H1 (cell line): ENCODE measurements at regions of chr6 and their contacts with region 1.

Region 1: GRCh38 chr6:16206595-16207037 is 31.8 kb upstream of the GMPR start:
- DNase-seq: peak in 1 of 2 experiments; percentile 59
- H3K4me3 ChIP-seq: no peak overlapping the region
- H3K27ac ChIP-seq: no peak overlapping the region
- H3K4me1 ChIP-seq: no peaks in the 10 kb centered on the region
- H3K27me3 ChIP-seq: no peaks in the 10 kb centered on the region
- CTCF ChIP-seq: peak in 2 of 3 experiments; percentile 88; a peak in 3 of 4 replicates
- EP300 ChIP-seq: no peak
- POLR2A ChIP-seq: no peak
- RAD21 ChIP-seq: peak; percentile 96 to 97

Region 2: DNA sequence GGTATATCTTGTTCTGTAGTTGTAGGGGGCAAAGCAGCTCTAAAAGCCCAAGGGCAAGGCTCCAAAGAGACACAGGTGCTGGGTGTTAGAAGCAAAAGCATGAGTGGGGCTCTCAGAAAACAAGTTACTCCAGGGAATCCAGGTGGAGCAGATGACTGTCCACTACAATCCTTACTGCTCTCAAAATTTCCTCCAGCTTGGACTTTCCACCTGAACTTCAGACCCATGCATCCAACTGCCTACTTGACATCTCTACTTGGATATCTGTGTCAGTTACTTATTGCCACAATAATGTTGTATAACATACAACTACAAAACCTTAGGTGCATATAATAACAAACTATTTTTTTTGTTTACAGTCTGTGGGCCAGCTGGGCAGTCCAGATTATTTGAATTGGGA is 521.0 kb before region 1 on chr6:
- CTCF ChIA-PET with region 1: interaction called, 14 read pairs
- POLR2A ChIA-PET with region 1: no interaction called
- DNase-seq: no peak
- H3K4me3 ChIP-seq: no peak overlapping the region
- H3K27ac ChIP-seq: no peak overlapping the region
- H3K4me1 ChIP-seq: no peaks in the 10 kb centered on the region
- H3K27me3 ChIP-seq: no peaks in the 10 kb centered on the region
- CTCF ChIP-seq: no peak
- EP300 ChIP-seq: no peak
- POLR2A ChIP-seq: no peak
- RAD21 ChIP-seq: no peak

Region 3: DNA sequence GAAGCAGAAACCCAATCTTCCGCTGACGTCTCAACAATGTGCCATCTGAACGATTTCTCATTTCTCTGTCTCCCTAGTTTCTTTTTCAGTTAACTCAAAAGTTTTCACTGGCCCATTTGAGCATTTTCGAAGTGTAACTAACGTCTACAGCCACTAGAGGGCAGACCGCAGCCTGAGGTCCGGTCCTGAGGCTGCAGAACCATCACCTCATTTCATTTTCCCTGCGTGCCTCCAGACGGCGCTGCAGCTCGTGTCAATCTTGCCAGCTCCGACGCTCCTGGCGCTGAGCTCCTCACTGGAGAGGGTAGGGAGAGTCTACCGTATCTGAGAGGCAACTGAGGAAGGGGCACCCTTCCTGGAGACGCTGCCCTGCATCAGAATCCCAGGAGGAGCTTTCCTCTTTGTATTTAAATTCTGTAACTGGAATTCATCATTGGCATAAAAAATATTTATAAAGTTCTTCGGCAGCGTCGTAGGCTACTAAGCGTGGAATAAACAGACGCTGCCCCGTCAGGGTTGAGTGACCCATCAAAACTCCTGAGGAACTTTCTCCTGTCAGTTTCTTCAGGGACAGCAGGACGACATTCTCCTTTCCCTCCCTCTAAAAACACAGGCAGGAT is 515.3 kb before region 1 on chr6:
- CTCF ChIA-PET with region 1: interaction called, 48 read pairs
- POLR2A ChIA-PET with region 1: no interaction called
- DNase-seq: peak; percentile 75 to 79
- H3K4me3 ChIP-seq: no peak overlapping the region
- H3K27ac ChIP-seq: no peak overlapping the region
- H3K4me1 ChIP-seq: no peaks in the 10 kb centered on the region
- H3K27me3 ChIP-seq: no peaks in the 10 kb centered on the region
- CTCF ChIP-seq: peak; percentile 100
- EP300 ChIP-seq: no peak
- POLR2A ChIP-seq: no peak
- RAD21 ChIP-seq: peak; percentile 100

Region 4: GRCh38 chr6:16168858-16169257 is 37.8 kb before region 1 on chr6:
- CTCF ChIA-PET with region 1: interaction called, 14 read pairs
- POLR2A ChIA-PET with region 1: no interaction called
- DNase-seq: no peak
- H3K4me3 ChIP-seq: no peak overlapping the region
- H3K27ac ChIP-seq: no peak overlapping the region
- H3K4me1 ChIP-seq: no peaks in the 10 kb centered on the region
- H3K27me3 ChIP-seq: no peaks in the 10 kb centered on the region; a peak in 1 of 7 replicates
- CTCF ChIP-seq: peak in 2 of 3 experiments; percentile 67 to 72; a peak in 3 of 4 replicates
- EP300 ChIP-seq: no peak
- POLR2A ChIP-seq: no peak
- RAD21 ChIP-seq: peak; percentile 82 to 88

Region 5: GRCh38 chr6:16183187-16183664 is 23.4 kb before region 1 on chr6:
- CTCF ChIA-PET with region 1: interaction called, 19 read pairs
- POLR2A ChIA-PET with region 1: no interaction called
- DNase-seq: no peak
- H3K4me3 ChIP-seq: no peak overlapping the region
- H3K27ac ChIP-seq: no peak overlapping the region
- H3K4me1 ChIP-seq: peaks cover 0 to 5% (median 0%) of the 10 kb centered on the region in 4 experiments; a peak in 2 of 7 replicates
- H3K27me3 ChIP-seq: no peaks in the 10 kb centered on the region
- CTCF ChIP-seq: peak in 2 of 3 experiments; percentile 46 to 60; a peak in 2 of 4 replicates
- EP300 ChIP-seq: no peak
- POLR2A ChIP-seq: no peak
- RAD21 ChIP-seq: peak; percentile 66 to 70

Region 6: DNA sequence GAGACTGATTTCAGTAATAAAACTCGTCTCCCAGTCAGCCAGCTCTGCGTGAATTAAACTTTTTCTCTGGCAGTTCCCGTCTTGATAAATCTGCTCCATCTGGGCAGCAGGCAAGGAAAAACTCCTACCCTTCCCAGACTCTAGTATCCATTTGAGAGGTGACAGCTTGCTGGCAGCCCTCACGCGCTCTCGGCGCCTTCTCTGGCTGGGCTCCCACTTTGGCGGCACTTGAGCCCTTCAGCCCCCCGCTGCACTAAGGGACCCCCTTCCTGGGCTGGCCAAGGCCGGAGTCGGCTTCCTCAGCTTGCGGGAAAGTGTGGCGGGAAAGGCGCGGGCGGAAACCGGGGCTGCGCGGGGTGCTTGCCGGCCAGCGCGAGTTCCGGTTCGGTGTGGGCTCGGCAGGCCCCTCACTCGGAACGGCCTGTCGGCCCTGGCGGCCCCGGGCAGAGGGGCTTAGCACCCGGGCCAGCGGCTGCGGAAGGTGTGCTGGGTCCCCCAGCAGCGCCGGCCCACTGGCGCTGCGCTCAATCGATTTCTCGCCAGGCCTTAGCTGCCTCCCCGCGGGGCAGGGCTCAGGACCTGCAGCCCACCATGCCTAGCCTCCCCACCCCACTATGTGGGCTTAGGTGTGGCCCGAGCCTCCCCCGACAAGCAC is 10.0 kb after region 1 on chr6:
- CTCF ChIA-PET with region 1: interaction called, 30 read pairs
- POLR2A ChIA-PET with region 1: no interaction called
- DNase-seq: peak in 1 of 2 experiments; percentile 54
- H3K4me3 ChIP-seq: peak overlapping the region in 1 of 4 experiments; percentile 38; a peak in 2 of 8 replicates
- H3K27ac ChIP-seq: no peak overlapping the region
- H3K4me1 ChIP-seq: no peaks in the 10 kb centered on the region
- H3K27me3 ChIP-seq: peaks cover 0 to 3% (median 0%) of the 10 kb centered on the region in 4 experiments; a peak in 2 of 7 replicates
- CTCF ChIP-seq: peak in 1 of 3 experiments; percentile 0; a peak in 1 of 4 replicates
- EP300 ChIP-seq: no peak
- POLR2A ChIP-seq: no peak
- RAD21 ChIP-seq: no peak

Region 7: GRCh38 chr6:16228709-16229665 is 22.4 kb after region 1 on chr6:
- CTCF ChIA-PET with region 1: interaction called, 14 read pairs
- POLR2A ChIA-PET with region 1: no interaction called
- DNase-seq: no peak
- H3K4me3 ChIP-seq: no peak overlapping the region
- H3K27ac ChIP-seq: no peak overlapping the region
- H3K4me1 ChIP-seq: peaks cover 2 to 5% (median 5%) of the 10 kb centered on the region in 4 experiments; a peak in 5 of 7 replicates
- H3K27me3 ChIP-seq: peaks cover 0 to 2% (median 0%) of the 10 kb centered on the region in 4 experiments; a peak in 1 of 7 replicates
- CTCF ChIP-seq: no peak
- EP300 ChIP-seq: no peak
- POLR2A ChIP-seq: no peak
- RAD21 ChIP-seq: no peak